ENCODE measurements at regions of chr3 and their contacts with region 1.

Region 1: DNA sequence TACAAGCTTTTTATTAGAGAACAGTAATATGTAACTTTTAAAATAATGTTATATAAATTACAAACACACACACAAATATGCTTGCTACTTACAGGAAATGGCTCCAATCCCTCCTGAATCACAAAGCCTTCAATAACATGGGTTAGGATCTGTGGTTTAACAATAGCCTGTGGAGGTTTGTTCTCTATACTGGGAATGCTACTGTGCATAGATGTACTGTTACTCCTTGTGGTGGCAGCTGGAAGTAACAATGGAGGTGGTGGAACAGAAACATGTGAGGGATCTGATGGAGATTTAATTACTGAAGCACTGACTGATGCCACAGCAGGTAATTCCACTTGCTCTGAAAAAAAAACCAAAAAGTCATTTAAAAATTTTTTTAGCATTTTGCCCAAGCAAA is 64.4 kb downstream of the PHC3 start:
- DNase-seq: no peak
- CTCF ChIP-seq: no peak

Region 2: GRCh38 chr3:169812332-169813235 is 304.6 kb before region 1 on chr3 and contains the starts of genes LRRC34 and LRRIQ4:
- CTCF ChIA-PET with region 1: no interaction called
- POLR2A ChIA-PET with region 1: no interaction called
- DNase-seq: peak; percentile 80
- CTCF ChIP-seq: no peak

Region 3: DNA sequence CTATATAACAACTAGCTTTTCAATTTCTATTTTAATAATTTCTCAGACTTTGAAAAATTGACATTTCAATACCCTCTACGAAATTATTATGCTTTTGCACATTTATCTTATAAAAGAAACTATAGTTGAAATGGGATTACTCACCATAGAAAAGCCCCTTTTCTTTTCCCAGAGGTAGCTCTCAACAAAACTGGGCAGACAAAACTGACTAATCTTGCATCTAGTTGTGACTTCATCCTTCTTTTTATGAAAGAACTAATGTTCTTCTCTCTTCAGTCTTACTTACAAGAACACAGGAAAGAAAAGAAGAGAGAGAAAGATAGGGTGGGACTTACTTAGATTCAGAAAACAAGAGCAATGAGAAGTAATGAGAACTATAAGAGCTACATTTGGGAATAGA is 18.4 kb before region 1 on chr3:
- CTCF ChIA-PET with region 1: interaction called, 26 read pairs
- POLR2A ChIA-PET with region 1: no interaction called
- DNase-seq: no peak
- CTCF ChIP-seq: no peak